Naive thymus-derived CD4-positive, alpha-beta T cell (primary cell): ENCODE measurements at regions of chr7 and their contacts with region 1.

Region 1: GRCh38 chr7:121081327-121081936 is 92.9 kb downstream of the CPED1 start:
- DNase-seq: peak in 7 of 9 donors; percentile 19 to 63 (median 47)
- ATAC-seq: peak; percentile 88
- H3K4me3 ChIP-seq: no peak overlapping the region
- H3K4me3 Mint-ChIP-seq: no peak overlapping the region
- H3K27ac ChIP-seq: no peak overlapping the region
- H3K27ac Mint-ChIP-seq: no peak overlapping the region
- H3K4me1 ChIP-seq: no peaks in the 10 kb centered on the region
- H3K4me1 Mint-ChIP-seq: no peaks in the 10 kb centered on the region
- H3K27me3 ChIP-seq: no peaks in the 10 kb centered on the region
- H3K27me3 Mint-ChIP-seq: peaks cover 5 to 26% (median 12%) of the 10 kb centered on the region in 5 donors

Region 2: DNA sequence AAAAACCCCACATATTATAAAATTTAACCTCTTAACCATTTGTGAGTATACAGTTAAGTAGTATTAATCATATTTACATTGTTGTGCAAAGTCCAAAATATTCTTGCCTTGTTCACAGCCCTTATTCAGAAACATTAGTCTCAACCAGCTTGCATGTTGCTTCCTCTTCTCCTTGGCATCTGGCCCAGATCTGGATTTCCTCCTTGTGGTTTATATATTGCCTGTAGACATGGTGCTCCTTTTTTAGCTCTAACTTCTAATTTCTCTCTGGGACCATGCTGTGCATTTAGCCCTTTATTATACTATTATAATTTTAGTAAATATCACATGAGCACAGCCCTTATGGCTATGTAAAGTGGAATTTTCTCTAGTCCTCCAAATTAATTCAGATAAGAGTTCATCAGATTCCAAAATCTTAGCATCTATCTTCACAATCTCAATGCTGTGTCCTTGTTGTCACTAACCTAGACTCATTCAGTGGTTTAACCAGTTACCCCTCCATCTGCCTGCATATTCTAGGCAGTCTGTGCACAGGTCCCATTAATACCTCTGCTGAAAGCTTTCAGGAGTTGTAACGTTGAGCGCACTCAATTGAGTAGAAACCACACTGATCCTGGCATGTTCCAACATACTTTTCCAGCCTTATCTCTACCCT is 85.0 kb before region 1 on chr7:
- CTCF ChIA-PET with region 1: interaction called, 69 read pairs
- POLR2A ChIA-PET with region 1: no interaction called
- intact Hi-C with region 1: no loop called
- DNase-seq: peak in 7 of 9 donors; percentile 60 to 80 (median 75)
- ATAC-seq: peak; percentile 91
- H3K4me3 ChIP-seq: no peak overlapping the region
- H3K4me3 Mint-ChIP-seq: peak overlapping the region in 9 of 10 donors; percentile 10 to 69 (median 32)
- H3K27ac ChIP-seq: no peak overlapping the region
- H3K27ac Mint-ChIP-seq: peak overlapping the region in 3 of 9 donors; percentile 4 to 38 (median 34)
- H3K4me1 ChIP-seq: peaks cover 0 to 13% of the 10 kb centered on the region in 2 donors
- H3K4me1 Mint-ChIP-seq: peaks cover 7 to 56% (median 42%) of the 10 kb centered on the region in 7 donors
- H3K27me3 ChIP-seq: no peaks in the 10 kb centered on the region
- H3K27me3 Mint-ChIP-seq: peaks cover 0 to 42% (median 15%) of the 10 kb centered on the region in 5 donors

Region 3: GRCh38 chr7:121107923-121108498 is 26.6 kb after region 1 on chr7:
- CTCF ChIA-PET with region 1: no interaction called
- POLR2A ChIA-PET with region 1: no interaction called
- intact Hi-C with region 1: loop called in 1 of 2 experiments (anchors 1 kb)
- DNase-seq: peak in 7 of 9 donors; percentile 26 to 59 (median 54)
- ATAC-seq: peak; percentile 83
- H3K4me3 ChIP-seq: no peak overlapping the region
- H3K4me3 Mint-ChIP-seq: no peak overlapping the region
- H3K27ac ChIP-seq: no peak overlapping the region
- H3K27ac Mint-ChIP-seq: no peak overlapping the region
- H3K4me1 ChIP-seq: no peaks in the 10 kb centered on the region
- H3K4me1 Mint-ChIP-seq: no peaks in the 10 kb centered on the region
- H3K27me3 ChIP-seq: no peaks in the 10 kb centered on the region
- H3K27me3 Mint-ChIP-seq: peaks cover 0 to 27% (median 5%) of the 10 kb centered on the region in 5 donors